ENCODE measurements at regions of chr11 and their contacts with region 1.

Region 1: GRCh38 chr11:45233121-45233803 is 52.9 kb downstream of the SYT13 start:
- DNase-seq: peak; percentile 28
- ATAC-seq: peak; percentile 97
- H3K4me3 ChIP-seq: no peak overlapping the region
- H3K27ac ChIP-seq: no peak overlapping the region
- H3K4me1 ChIP-seq: no peaks in the 10 kb centered on the region
- H3K27me3 ChIP-seq: peaks cover 8% of the 10 kb centered on the region; the same call in 1 of the 2 replicates
- CTCF ChIP-seq: peak; percentile 17 to 95 (median 82); a peak in 5 of 6 replicates
- POLR2A ChIP-seq: no peak
- RAD21 ChIP-seq: peak; percentile 32; the same call in 1 of the 2 replicates

Region 2: GRCh38 chr11:45245218-45246045 is 12.2 kb after region 1 on chr11:
- CTCF ChIA-PET with region 1: interaction called, 13 read pairs
- POLR2A ChIA-PET with region 1: no interaction called
- RAD21 ChIA-PET with region 1: no interaction called
- intact Hi-C with region 1: no loop called
- DNase-seq: no peak
- ATAC-seq: no peak
- H3K4me3 ChIP-seq: no peak overlapping the region
- H3K27ac ChIP-seq: no peak overlapping the region
- H3K4me1 ChIP-seq: no peaks in the 10 kb centered on the region
- H3K27me3 ChIP-seq: no peaks in the 10 kb centered on the region
- CTCF ChIP-seq: no peak
- POLR2A ChIP-seq: no peak
- RAD21 ChIP-seq: no peak

Region 3: GRCh38 chr11:45259592-45259991 is 26.3 kb after region 1 on chr11:
- CTCF ChIA-PET with region 1: no interaction called
- POLR2A ChIA-PET with region 1: no interaction called
- RAD21 ChIA-PET with region 1: no interaction called
- intact Hi-C with region 1: no loop called
- DNase-seq: peak; percentile 61
- ATAC-seq: peak; percentile 96
- H3K4me3 ChIP-seq: peak overlapping the region in 1 of 2 experiments; percentile 24; a peak in 2 of 4 replicates
- H3K27ac ChIP-seq: no peak overlapping the region
- H3K4me1 ChIP-seq: peaks cover 16 to 45% of the 10 kb centered on the region in 2 experiments
- H3K27me3 ChIP-seq: no peaks in the 10 kb centered on the region
- CTCF ChIP-seq: no peak
- POLR2A ChIP-seq: no peak
- RAD21 ChIP-seq: no peak